ENCODE measurements at regions of chr17 and their contacts with region 1.

Region 1: GRCh38 chr17:1365445-1366039 is 34.5 kb downstream of the YWHAE start:
- DNase-seq: peak; percentile 81
- ATAC-seq: peak; percentile 76
- H3K4me3 ChIP-seq: no peak overlapping the region
- H3K27ac ChIP-seq: peak overlapping the region; percentile 11; the same call in 1 of the 2 replicates
- H3K4me1 ChIP-seq: peaks cover 18% of the 10 kb centered on the region
- H3K27me3 ChIP-seq: no peaks in the 10 kb centered on the region
- CTCF ChIP-seq: peak; percentile 85
- POLR2A ChIP-seq: no peak
- RAD21 ChIP-seq: peak; percentile 82

Region 2: DNA sequence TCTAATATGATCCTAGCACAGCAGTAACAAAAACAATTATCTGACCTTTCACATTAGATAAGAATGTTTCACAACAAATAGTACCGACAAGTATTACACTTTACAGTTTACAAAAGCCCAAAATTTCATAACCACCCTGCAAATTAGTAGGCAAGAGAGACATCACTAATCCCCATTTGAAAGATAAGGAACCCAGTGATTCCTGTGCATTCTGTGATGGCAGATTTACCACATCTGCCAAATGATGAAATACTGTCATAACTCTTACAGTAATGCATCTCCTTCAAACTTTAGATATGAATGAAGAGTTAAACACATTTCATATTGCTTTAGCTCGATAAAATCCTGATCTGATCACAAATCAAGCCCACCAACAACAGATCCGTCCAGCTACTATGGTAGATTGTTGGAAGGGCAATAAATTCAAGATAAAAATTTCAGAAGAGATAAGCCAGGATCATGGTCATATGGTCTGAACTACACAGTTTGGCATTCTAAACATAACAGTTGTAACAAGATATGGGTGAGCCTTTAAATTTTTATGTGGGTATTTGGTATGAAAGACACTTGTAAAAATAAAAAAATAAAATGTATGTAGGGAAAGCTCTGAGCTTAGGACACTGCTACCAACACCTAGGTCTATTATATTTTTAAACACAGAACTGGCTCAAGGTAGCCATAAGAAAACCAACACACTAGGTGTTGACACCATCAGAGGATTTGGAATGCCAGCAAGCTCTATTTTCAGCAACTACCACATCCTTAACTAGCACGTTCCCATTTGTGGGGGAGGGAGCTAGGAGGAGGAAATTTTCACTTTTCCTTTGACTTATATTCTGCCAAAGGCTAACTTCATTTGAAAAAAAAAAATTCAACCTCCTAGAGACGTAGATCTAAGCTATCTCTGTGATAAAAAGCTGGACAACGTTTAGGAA is 25.2 kb after region 1 on chr17:
- CTCF ChIA-PET with region 1: interaction called, 15 read pairs
- POLR2A ChIA-PET with region 1: interaction called, 4 read pairs
- dilution Hi-C with region 1: no loop called
- in situ Hi-C with region 1: no loop called
- intact Hi-C with region 1: no loop called
- DNase-seq: peak; percentile 51
- ATAC-seq: peak; percentile 63
- H3K4me3 ChIP-seq: no peak overlapping the region
- H3K27ac ChIP-seq: peak overlapping the region; percentile 1; the same call in 1 of the 2 replicates
- H3K4me1 ChIP-seq: peaks cover 11% of the 10 kb centered on the region
- H3K27me3 ChIP-seq: no peaks in the 10 kb centered on the region
- CTCF ChIP-seq: no peak
- POLR2A ChIP-seq: no peak
- RAD21 ChIP-seq: no peak

Region 3: GRCh38 chr17:1399679-1400512 is 34.4 kb after region 1 on chr17 and contains the start of gene YWHAE:
- CTCF ChIA-PET with region 1: interaction called, 4 read pairs
- POLR2A ChIA-PET with region 1: no interaction called
- dilution Hi-C with region 1: no loop called
- in situ Hi-C with region 1: no loop called
- intact Hi-C with region 1: loop called (anchors 2 kb)
- DNase-seq: peak; percentile 91
- ATAC-seq: peak; percentile 94
- H3K4me3 ChIP-seq: peak within 1 kb of the TSS; percentile 79
- H3K27ac ChIP-seq: peak within 1 kb of the TSS; percentile 98
- H3K4me1 ChIP-seq: no peaks in the 10 kb centered on the region; the same call in none of the 2 replicates
- H3K27me3 ChIP-seq: no peaks in the 10 kb centered on the region
- CTCF ChIP-seq: no peak
- POLR2A ChIP-seq: peak; percentile 95
- RAD21 ChIP-seq: peak; percentile 21; the same call in 1 of the 2 replicates
- total RNA-seq, gene YWHAE: 358 and 964 TPM in 2 replicates

Region 4: GRCh38 chr17:1438593-1439083 is 73.1 kb after region 1 on chr17:
- CTCF ChIA-PET with region 1: no interaction called
- POLR2A ChIA-PET with region 1: interaction called, 7 read pairs
- dilution Hi-C with region 1: no loop called
- in situ Hi-C with region 1: loop called (anchors 10 kb)
- intact Hi-C with region 1: no loop called
- DNase-seq: peak; percentile 89
- ATAC-seq: peak; percentile 92
- H3K4me3 ChIP-seq: no peak overlapping the region
- H3K27ac ChIP-seq: peak overlapping the region; percentile 85
- H3K4me1 ChIP-seq: peaks cover 16% of the 10 kb centered on the region
- H3K27me3 ChIP-seq: no peaks in the 10 kb centered on the region
- CTCF ChIP-seq: no peak
- POLR2A ChIP-seq: no peak
- RAD21 ChIP-seq: no peak

Region 5: DNA sequence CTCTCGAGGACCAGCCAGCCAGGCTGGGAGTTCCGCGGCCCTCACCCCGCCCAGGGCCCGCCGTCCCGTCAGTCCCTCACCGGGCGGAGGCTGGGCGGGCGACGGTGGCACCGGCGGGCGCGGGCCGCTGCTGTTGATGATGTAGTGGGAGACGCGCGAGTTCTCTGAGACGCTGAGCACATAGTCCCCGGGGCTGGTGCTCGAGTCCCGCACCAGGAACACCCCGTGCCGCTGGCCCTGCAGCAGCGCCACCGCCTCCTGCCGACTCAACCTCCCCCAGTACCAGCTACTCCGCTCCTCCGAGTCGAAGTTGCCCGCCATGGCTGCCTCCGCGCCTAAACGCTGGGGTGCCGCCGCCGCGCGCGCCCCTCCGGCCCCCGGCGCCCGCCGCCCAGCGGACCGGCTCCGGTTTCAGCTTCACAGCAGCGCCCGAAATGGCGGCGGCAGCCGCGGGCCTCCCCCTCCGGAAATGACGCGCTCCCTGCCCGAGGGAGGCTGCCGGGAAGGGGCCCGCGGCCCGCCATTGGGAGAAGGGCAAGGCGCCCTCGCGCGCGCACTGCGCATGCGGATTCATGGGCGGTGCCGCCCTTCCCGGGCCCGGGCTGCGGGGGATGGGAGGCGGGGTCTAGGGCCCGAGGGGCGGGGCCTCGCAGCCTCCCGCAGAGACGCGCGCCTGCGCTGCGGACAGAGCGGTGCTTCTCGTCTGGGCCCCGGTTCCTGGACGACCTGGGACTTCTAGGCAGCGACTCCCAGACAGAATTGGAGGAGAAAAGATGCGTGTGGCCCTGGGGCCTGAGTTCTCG is 90.5 kb after region 1 on chr17 and contains the start of gene CRK:
- CTCF ChIA-PET with region 1: no interaction called
- POLR2A ChIA-PET with region 1: interaction called, 3 read pairs
- dilution Hi-C with region 1: no loop called
- in situ Hi-C with region 1: no loop called
- intact Hi-C with region 1: loop called (anchors 1 kb)
- DNase-seq: peak; percentile 93
- ATAC-seq: peak; percentile 94
- H3K4me3 ChIP-seq: peak within 1 kb of the TSS; percentile 75
- H3K27ac ChIP-seq: peak within 1 kb of the TSS; percentile 76
- H3K4me1 ChIP-seq: peaks cover 7% of the 10 kb centered on the region
- H3K27me3 ChIP-seq: no peaks in the 10 kb centered on the region
- CTCF ChIP-seq: peak; percentile 10; the same call in 1 of the 2 replicates
- POLR2A ChIP-seq: peak; percentile 94
- RAD21 ChIP-seq: no peak
- total RNA-seq, gene CRK: 100 and 123 TPM in 2 replicates

Region 6: GRCh38 chr17:1474402-1475189 is 109.1 kb after region 1 on chr17:
- CTCF ChIA-PET with region 1: no interaction called
- POLR2A ChIA-PET with region 1: no interaction called
- dilution Hi-C with region 1: no loop called
- in situ Hi-C with region 1: no loop called
- intact Hi-C with region 1: no loop called
- DNase-seq: no peak
- ATAC-seq: no peak
- H3K4me3 ChIP-seq: no peak overlapping the region
- H3K27ac ChIP-seq: no peak overlapping the region
- H3K4me1 ChIP-seq: no peaks in the 10 kb centered on the region
- H3K27me3 ChIP-seq: no peaks in the 10 kb centered on the region
- CTCF ChIP-seq: no peak
- POLR2A ChIP-seq: no peak
- RAD21 ChIP-seq: no peak

Region 7: DNA sequence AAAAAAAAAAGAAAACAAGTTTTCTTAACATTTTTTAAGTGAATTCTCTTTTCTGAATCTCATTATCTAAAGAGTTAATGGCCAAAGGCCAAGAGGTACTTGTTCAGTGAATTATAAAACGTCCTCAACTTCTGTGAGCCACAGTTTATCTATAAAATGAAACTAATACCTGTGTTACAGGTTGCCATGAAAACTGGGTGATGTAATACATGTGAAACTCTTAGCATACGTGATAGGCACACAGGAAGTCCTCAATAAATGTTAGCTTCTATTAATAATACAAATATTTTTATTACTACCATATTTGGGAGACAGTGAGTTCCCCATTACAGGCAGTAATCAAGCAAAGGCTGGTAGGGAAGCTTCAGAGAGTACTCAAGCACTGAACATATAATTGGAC is 164.3 kb after region 1 on chr17:
- CTCF ChIA-PET with region 1: no interaction called
- POLR2A ChIA-PET with region 1: no interaction called
- dilution Hi-C with region 1: no loop called
- in situ Hi-C with region 1: no loop called
- intact Hi-C with region 1: no loop called
- DNase-seq: no peak
- ATAC-seq: no peak
- H3K4me3 ChIP-seq: no peak overlapping the region
- H3K27ac ChIP-seq: no peak overlapping the region
- H3K4me1 ChIP-seq: no peaks in the 10 kb centered on the region
- H3K27me3 ChIP-seq: no peaks in the 10 kb centered on the region
- CTCF ChIP-seq: no peak
- POLR2A ChIP-seq: no peak
- RAD21 ChIP-seq: no peak